HEK293 (cell line): ENCODE measurements at regions of chr9 and their contacts with region 1.

Region 1: DNA sequence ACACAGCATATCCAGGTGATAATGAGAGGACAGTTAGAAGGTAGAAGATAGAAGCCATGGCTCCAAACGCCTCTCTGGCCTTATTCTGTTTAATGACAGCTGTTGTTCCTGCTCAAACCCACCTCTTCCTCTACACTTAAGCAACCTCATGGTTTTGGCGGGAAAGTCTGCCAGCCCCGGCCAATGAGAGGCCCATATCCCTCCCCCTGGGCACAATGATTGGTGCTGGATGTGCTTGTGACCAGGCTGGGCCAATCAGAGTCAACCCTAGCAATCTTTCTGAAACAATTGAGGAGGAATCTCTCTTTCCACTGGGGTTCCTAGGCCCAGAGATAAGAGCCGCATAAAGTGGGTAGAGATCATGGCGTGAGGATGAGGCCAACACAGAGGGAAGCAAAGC is 4.8 kb upstream of the GFI1B start:
- H3K4me3 ChIP-seq: no peak overlapping the region
- H3K27ac ChIP-seq: no peak overlapping the region
- H3K4me1 ChIP-seq: no peaks in the 10 kb centered on the region
- CTCF ChIP-seq: no peak

Region 2: GRCh38 chr9:132873403-132873802 is 100.3 kb before region 1 on chr9:
- CTCF ChIA-PET with region 1: no interaction called
- POLR2A ChIA-PET with region 1: no interaction called
- H3K4me3 ChIP-seq: no peak overlapping the region
- H3K27ac ChIP-seq: no peak overlapping the region
- H3K4me1 ChIP-seq: no peaks in the 10 kb centered on the region
- CTCF ChIP-seq: no peak

Region 3: DNA sequence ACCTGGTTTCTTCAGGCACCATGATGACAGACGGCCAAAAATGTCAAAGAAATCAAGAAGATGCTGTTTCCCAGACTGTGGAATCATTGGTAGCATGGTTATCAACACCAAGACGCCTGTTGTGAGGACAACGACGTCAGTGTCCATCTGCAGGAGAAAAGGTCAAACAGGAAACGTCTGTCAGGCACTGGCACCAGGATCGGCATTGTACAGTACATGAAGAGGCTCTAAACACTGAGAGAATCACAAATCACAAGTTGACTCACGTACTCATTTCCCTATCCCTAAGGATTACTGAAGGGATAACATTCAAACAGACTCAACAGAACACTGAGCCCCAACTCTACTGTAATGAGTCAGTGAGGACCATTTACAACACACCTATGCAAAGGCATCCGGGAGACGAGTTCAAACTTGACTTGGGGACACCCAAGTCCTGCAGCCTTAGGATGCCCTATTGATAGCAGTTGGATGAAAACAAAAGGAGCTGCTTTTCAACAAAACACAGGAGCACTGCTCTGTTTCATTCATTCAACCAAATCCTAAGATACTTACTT is 50.3 kb before region 1 on chr9:
- CTCF ChIA-PET with region 1: interaction called, 14 read pairs
- POLR2A ChIA-PET with region 1: no interaction called
- H3K4me3 ChIP-seq: no peak overlapping the region
- H3K27ac ChIP-seq: no peak overlapping the region
- H3K4me1 ChIP-seq: no peaks in the 10 kb centered on the region
- CTCF ChIP-seq: no peak

Region 4: DNA sequence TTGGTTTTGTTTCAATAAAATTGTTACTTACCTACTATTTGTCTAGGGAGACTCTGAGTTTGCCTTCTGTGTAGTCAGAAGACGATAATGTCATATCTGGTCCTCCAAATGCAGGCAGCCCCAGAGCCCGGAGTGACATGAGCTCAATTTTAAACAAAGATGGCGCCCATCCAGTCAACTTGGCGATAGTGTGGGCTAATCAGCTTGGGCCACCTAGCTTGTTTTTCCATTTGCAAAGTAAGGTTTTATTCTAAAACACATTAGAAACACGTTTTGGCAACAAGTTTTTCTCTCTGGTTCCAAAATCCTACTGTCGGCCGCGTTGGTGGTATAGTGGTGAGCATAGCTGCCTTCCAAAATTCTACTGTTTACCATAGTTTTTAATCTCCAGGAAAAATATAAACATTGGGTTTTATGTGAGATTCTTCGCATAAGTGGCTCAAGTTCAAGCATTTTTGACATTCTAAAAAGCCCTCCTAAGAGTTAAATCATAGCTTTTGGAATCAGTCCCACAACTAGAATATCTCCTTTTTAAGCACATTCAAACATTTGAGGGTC is 42.5 kb before region 1 on chr9:
- CTCF ChIA-PET with region 1: interaction called, 14 read pairs
- POLR2A ChIA-PET with region 1: no interaction called
- H3K4me3 ChIP-seq: no peak overlapping the region
- H3K27ac ChIP-seq: no peak overlapping the region
- H3K4me1 ChIP-seq: no peaks in the 10 kb centered on the region
- CTCF ChIP-seq: no peak

Region 5: DNA sequence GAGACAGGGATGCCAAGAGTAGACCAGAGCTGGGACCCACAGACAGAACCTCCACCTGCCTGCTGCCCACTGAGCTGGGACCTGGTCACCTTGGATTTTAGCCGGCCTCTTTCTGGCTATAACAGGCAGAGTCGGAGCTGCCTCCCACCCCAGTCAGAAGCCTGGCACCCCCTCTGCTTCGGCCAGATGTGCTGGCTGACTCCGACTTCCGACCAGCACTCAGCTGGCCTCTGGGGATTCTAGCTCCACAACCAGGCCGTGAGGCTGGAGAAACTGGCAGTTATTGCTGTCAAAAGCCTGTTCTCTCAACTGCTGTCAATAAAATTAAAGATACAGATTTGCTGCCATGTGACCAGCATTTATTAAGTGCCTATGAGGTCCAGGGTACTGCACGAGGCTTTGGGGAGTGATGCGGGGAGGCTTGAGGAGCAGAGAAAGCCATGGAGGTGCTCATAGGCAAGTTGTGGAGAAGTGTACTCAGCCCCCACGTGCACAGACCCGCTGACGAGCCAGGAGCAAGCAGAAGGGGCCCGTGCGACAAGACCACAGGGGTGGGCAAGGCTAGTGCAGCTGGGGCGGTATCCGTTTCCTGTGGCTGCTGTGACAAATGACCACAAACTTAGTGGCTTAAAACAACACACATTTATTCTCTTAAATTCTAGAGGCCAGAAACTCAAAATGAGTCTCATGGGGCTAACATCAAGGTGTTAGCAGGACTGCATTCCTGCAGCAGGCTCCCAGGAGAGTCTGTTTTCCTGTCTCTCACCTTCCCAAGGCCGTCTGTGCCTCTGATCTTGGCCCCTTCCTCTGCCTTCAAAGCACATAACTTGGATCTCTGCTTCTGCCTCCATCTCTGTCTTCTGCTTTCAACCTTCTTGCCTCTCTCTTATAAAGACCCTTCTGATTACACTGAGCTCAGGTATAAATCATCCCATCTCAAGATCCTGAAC is 17.9 kb after region 1 on chr9:
- CTCF ChIA-PET with region 1: interaction called, 24 read pairs
- POLR2A ChIA-PET with region 1: no interaction called
- H3K4me3 ChIP-seq: no peak overlapping the region
- H3K27ac ChIP-seq: no peak overlapping the region
- H3K4me1 ChIP-seq: no peaks in the 10 kb centered on the region
- CTCF ChIP-seq: no peak

Region 6: GRCh38 chr9:133004091-133004998 is 30.6 kb after region 1 on chr9:
- CTCF ChIA-PET with region 1: interaction called, 12 read pairs
- POLR2A ChIA-PET with region 1: no interaction called
- H3K4me3 ChIP-seq: no peak overlapping the region
- H3K27ac ChIP-seq: no peak overlapping the region
- H3K4me1 ChIP-seq: no peaks in the 10 kb centered on the region
- CTCF ChIP-seq: no peak

Region 7: DNA sequence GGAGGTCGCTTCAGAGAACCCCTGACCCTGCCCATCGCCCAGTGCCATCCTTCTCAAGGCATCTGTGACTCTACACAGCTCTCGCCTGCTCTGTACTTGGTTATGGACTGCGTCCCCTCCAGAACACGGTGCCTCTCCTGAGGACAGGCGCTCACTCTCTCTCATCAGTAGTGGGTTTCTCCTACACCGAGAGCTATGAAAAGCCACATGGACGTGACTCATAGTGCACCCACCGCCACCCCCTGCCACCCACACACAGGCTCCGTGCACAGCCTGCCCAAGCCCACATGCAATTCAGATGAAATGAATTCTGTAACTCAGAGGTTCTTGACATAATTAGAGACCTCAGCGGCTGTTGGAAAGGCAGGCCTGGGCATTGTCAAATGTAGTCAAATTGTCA is 70.9 kb after region 1 on chr9:
- CTCF ChIA-PET with region 1: no interaction called
- POLR2A ChIA-PET with region 1: no interaction called
- H3K4me3 ChIP-seq: no peak overlapping the region
- H3K27ac ChIP-seq: no peak overlapping the region
- H3K4me1 ChIP-seq: no peaks in the 10 kb centered on the region
- CTCF ChIP-seq: no peak

Region 8: DNA sequence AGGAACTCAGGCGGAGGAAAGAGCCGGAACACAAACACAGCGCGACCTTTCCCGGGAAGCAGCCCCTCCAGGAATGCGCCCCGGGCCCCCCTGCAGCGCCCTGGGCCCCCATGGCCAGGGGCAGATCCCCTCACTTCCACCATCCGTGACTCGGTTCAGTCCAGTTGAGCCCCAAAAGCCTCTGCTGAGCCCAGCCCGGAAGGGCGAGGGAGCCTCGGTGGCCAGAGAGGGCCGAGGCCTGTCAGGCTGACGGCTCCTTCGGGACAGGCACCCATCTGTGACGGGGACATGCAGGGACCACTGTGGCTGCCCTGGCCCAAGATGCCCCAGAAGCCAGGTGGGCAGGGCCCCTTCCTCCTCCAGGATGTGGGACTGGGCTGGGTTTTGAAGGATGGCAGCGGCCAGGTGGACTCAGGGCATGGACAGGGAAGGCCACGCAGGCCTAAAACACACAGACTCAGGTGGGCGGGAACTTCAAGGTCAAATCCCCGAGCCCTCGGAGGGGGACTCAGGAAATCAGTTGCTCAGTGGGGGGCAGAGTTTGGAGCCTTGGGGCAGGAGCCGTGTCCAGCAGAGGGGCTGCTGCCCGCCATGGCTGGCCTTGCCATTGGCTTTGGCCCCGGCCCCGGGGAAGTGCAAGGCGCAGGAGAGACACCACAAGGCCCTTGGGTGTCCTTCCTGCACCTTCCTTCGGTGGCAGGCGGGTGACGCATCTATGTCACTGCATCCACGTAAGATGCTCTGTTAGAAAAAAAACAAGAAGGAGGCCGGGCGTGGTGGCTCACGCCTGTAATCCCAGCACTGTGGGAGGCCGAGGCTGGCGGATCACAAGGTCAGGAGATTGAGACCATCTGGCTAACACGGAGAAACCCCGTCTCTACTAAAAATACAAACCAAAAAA is 331.0 kb after region 1 on chr9:
- CTCF ChIA-PET with region 1: no interaction called
- POLR2A ChIA-PET with region 1: no interaction called
- H3K4me3 ChIP-seq: no peak overlapping the region
- H3K27ac ChIP-seq: no peak overlapping the region
- H3K4me1 ChIP-seq: no peaks in the 10 kb centered on the region
- CTCF ChIP-seq: no peak